ENCODE measurements at regions of chr9 and their contacts with region 1.

Region 1: GRCh38 chr9:136133191-136133958 is 14.7 kb upstream of the TMEM250 start:
- DNase-seq: peak; percentile 77 to 83
- H3K4me3 ChIP-seq: peak overlapping the region; percentile 49
- H3K4me3 Mint-ChIP-seq: peak overlapping the region; percentile 82
- H3K27ac Mint-ChIP-seq: peak overlapping the region; percentile 76
- H3K4me1 ChIP-seq: peaks cover 33% of the 10 kb centered on the region
- H3K4me1 Mint-ChIP-seq: peaks cover 12% of the 10 kb centered on the region
- H3K27me3 ChIP-seq: no peaks in the 10 kb centered on the region
- H3K27me3 Mint-ChIP-seq: no peaks in the 10 kb centered on the region
- CTCF ChIP-seq: peak; percentile 60 to 63

Region 2: DNA sequence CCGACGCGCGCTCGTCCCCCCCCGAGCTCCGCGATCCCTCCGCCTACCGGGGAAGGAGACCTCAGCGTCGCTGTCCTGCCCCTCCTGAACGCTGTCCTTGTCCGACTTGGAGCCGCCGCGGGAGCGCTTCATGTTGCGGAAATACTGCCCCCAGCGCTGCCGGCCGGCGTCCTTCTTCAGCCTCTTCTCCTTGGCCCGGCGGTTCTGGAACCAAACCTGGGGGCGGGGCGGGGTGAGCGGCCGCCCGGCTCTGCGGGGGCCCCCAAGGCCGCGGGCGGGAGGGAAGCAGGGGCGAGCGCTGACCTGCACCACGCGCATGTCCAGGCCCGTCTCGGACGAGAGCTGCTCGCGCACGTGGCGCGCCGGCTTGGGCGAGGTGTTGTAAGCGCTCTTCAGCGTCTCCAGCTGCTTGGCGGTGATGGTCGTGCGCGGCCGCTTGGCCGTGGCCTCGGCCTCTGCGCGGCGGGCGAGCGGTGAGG is 65.3 kb after region 1 on chr9:
- CTCF ChIA-PET with region 1: no interaction called
- POLR2A ChIA-PET with region 1: no interaction called
- intact Hi-C with region 1: no loop called
- DNase-seq: peak in 1 of 2 experiments; percentile 43
- H3K4me3 ChIP-seq: peak overlapping the region; percentile 21
- H3K4me3 Mint-ChIP-seq: peak overlapping the region; percentile 59
- H3K27ac Mint-ChIP-seq: no peak overlapping the region
- H3K4me1 ChIP-seq: peaks cover 17% of the 10 kb centered on the region
- H3K4me1 Mint-ChIP-seq: peaks cover 10% of the 10 kb centered on the region
- H3K27me3 ChIP-seq: no peaks in the 10 kb centered on the region
- H3K27me3 Mint-ChIP-seq: no peaks in the 10 kb centered on the region
- CTCF ChIP-seq: no peak

Region 3: DNA sequence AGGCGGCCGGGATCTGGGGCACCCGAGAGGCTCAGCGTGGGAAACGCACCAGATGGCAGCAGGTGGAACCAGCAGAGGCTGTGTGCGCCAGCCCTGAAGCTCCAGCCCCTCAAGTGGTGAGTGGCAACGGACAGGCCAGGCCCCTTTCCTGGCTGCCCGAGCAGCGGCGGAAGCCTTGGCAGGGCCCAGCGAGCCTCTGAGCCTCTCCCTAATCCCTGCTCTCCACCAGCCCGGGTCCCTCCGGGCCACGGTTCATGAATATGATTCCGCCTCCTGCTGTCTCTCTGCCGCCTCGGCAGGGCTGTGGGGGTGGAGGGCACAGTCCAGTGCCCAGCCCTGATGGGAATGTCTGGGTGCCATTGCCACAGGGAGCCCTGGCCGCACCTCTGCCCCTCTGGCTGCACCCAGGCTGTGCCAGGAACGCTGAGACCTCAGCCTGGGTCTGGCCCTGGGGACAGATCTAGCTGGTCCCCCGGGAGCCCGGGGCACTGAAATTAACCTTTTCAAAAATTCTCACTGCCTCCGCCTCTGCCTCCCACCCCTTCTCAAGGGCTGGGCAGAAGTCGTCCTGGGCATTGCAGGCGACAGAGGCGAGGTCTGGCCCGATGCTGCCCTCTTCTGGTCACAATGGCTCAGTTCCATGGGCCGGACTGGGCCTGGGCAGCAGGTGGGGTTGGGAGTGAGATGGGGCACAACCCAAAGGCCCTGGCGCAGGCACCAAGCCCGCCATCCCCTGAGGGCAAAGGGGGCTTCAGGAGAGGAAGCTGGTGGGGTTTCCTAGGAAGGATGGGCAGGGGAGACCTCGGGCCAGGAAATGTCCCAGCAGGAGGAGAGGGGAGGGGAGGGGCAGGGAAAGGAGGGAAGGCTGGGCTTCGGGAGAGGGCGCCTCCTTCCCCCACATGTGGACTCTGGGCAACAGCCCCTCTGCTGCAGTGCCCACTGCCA is 150.2 kb after region 1 on chr9:
- CTCF ChIA-PET with region 1: no interaction called
- POLR2A ChIA-PET with region 1: no interaction called
- intact Hi-C with region 1: loop called (anchors 1 kb)
- DNase-seq: peak; percentile 77 to 86
- H3K4me3 ChIP-seq: no peak overlapping the region
- H3K4me3 Mint-ChIP-seq: no peak overlapping the region
- H3K27ac Mint-ChIP-seq: no peak overlapping the region
- H3K4me1 ChIP-seq: no peaks in the 10 kb centered on the region
- H3K4me1 Mint-ChIP-seq: no peaks in the 10 kb centered on the region
- H3K27me3 ChIP-seq: no peaks in the 10 kb centered on the region
- H3K27me3 Mint-ChIP-seq: no peaks in the 10 kb centered on the region
- CTCF ChIP-seq: peak; percentile 83 to 86

Measured in Caco-2 (cell line).